Activated CD4-positive, alpha-beta T cell treated with anti-CD3 and anti-CD28 coated beads, Interleukin-2, amount 10 ng/mL, durations not matched to agents 24 days and 14 days (primary cell): ENCODE measurements at regions of chr11 and their contacts with region 1.

Region 1: GRCh38 chr11:66438504-66439466 is at the start of gene MRPL11:
- DNase-seq: peak; percentile 97
- H3K4me3 Mint-ChIP-seq: peak within 1 kb of the TSS; percentile 93
- H3K27ac Mint-ChIP-seq: peak within 1 kb of the TSS; percentile 97
- H3K4me1 Mint-ChIP-seq: peaks cover 11% of the 10 kb centered on the region
- H3K27me3 Mint-ChIP-seq: no peaks in the 10 kb centered on the region
- total RNA-seq, gene MRPL11: 102 TPM in 2 replicates

Region 2: DNA sequence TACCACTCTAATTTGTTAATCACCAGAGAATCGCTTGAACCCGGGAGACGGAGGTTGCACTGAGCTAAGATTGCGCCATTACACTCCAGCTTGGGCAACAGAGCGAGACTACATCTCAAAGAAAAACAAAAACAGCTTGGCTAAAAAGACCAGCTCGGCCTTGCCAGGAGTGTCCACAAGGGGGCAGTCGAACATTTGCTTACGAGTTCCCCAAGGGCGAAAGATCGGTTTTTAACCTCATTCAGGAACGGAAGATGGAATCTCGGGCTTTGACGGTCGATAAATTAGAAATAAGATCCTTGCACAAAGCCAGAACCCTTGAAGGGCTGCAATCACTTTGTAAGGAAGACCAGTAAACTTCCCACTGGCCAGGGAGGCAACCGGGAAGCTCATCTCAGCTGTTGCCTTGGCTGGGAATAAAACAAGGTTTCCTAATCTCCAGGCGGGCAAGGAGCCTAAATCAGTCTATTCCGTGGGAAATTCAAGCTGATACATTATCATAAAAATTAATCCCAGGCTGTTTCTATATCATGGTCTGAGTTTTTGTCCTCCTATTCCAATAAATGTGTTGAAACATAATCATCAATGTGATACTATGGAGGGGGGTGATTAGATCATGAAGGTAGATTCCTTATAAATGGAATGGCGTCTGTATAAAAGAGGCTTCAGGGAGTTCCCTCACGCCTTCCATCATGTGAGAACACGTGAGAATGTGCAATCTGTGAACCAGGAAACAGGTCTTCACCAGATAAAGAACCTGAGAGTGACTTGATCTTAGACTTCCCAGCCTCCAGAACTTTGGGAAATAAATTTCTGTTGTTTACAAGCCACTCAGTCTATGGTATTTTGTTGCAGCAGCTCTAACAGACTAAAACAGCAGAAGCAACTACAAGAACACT is 52.4 kb before region 1 on chr11:
- intact Hi-C with region 1: loop called (anchors 5 kb)
- DNase-seq: peak; percentile 95
- H3K4me3 Mint-ChIP-seq: peak overlapping the region; percentile 58
- H3K27ac Mint-ChIP-seq: no peak overlapping the region
- H3K4me1 Mint-ChIP-seq: peaks cover 8% of the 10 kb centered on the region
- H3K27me3 Mint-ChIP-seq: peaks cover 5% of the 10 kb centered on the region

Region 3: GRCh38 chr11:66408488-66409214 is 30.1 kb before region 1 on chr11:
- intact Hi-C with region 1: loop called (anchors 2 kb)
- DNase-seq: peak; percentile 98
- H3K4me3 Mint-ChIP-seq: peak overlapping the region; percentile 88
- H3K27ac Mint-ChIP-seq: peak overlapping the region; percentile 74
- H3K4me1 Mint-ChIP-seq: peaks cover 8% of the 10 kb centered on the region
- H3K27me3 Mint-ChIP-seq: peaks cover 18% of the 10 kb centered on the region

Region 4: GRCh38 chr11:66466225-66467027 is 27.6 kb after region 1 on chr11 and contains the start of gene PELI3:
- intact Hi-C with region 1: loop called (anchors 1 kb)
- DNase-seq: peak; percentile 97
- H3K4me3 Mint-ChIP-seq: peak within 1 kb of the TSS; percentile 92
- H3K27ac Mint-ChIP-seq: peak within 1 kb of the TSS; percentile 84
- H3K4me1 Mint-ChIP-seq: peaks cover 33% of the 10 kb centered on the region
- H3K27me3 Mint-ChIP-seq: no peaks in the 10 kb centered on the region
- total RNA-seq, gene PELI3: 16.1 and 18.3 TPM in 2 replicates

Region 5: GRCh38 chr11:66480117-66480938 is 41.5 kb after region 1 on chr11 and contains the start of gene DPP3:
- intact Hi-C with region 1: loop called (anchors 1 kb)
- DNase-seq: peak; percentile 99
- H3K4me3 Mint-ChIP-seq: peak within 1 kb of the TSS; percentile 93
- H3K27ac Mint-ChIP-seq: peak within 1 kb of the TSS; percentile 90
- H3K4me1 Mint-ChIP-seq: peaks cover 27% of the 10 kb centered on the region
- H3K27me3 Mint-ChIP-seq: no peaks in the 10 kb centered on the region
- total RNA-seq, gene DPP3: 97.1 and 106 TPM in 2 replicates